Dorsolateral prefrontal cortex (tissue), 120 donors: ENCODE measurements at regions of chr12 and their contacts with region 1.

Region 1: DNA sequence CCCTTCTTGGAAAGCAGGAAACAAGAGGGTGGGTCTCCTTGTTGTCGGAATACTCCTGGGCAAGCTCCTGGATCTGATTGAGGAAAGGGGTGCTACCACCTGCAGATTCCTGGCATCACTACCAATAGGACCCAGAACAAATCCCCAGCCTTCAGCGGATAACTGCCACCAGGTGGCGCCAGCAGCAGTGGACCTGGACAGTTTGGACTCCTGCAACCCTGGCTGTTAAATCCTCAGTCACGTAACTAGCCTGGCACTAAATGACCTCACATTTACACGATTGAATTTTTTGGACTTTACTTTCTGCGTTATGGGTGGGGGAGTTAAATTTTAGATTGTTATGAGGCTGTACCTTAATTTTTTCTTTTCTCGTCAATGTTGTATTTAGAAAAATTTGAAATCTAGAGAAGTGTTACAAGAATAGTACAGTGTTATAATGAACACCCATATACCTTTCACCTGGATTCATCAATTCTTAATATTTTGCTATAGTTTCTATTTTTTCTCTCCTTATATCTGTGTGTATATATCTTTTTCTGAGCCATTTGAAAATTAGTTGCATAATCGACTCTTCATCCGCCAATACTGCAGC is 95.6 kb downstream of the GAS2L3 start:
- DNase-seq: peak; percentile 22 to 81 (median 70)
- H3K4me3 ChIP-seq: no peak overlapping the region
- H3K27ac ChIP-seq: no peak overlapping the region
- H3K27me3 ChIP-seq: peaks cover 0 to 11% (median 0%) of the 10 kb centered on the region in 45 donors
- CTCF ChIP-seq: peak; percentile 62 to 91 (median 78)

Region 2: DNA sequence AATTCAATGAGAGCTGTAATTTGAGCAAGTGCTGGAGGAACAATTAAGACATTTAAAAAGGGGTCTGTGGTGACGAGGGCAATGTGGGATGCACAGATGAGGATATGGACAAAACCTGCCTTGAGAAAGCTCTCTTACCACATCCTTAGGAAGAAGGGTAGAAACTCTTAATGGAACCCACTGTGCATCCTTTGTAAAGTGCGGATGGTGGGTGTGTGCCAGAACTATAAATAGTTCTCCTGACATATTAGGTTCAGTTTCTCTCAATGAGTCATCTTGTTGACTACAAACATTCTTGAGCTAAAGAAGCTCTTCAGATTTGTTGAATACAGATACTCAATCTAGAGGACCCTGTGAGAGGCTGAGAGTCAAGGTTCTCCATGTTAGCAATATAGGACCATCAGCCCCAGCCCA is 19.4 kb after region 1 on chr12:
- intact Hi-C with region 1: no loop called
- DNase-seq: no peak
- H3K4me3 ChIP-seq: no peak overlapping the region
- H3K27ac ChIP-seq: no peak overlapping the region
- H3K27me3 ChIP-seq: no peaks in the 10 kb centered on the region
- CTCF ChIP-seq: no peak

Region 3: GRCh38 chr12:100716945-100717732 is 48.1 kb after region 1 on chr12:
- intact Hi-C with region 1: no loop called
- DNase-seq: no peak
- H3K4me3 ChIP-seq: peak overlapping the region in 48 of 59 donors; percentile 7 to 60 (median 32)
- H3K27ac ChIP-seq: no peak overlapping the region
- H3K27me3 ChIP-seq: peaks cover 0 to 77% (median 54%) of the 10 kb centered on the region in 45 donors
- CTCF ChIP-seq: no peak

Region 4: GRCh38 chr12:100741084-100741711 is 72.2 kb after region 1 on chr12:
- intact Hi-C with region 1: loop called (anchors 5 kb)
- DNase-seq: peak in 1 of 10 donors; percentile 6
- H3K4me3 ChIP-seq: no peak overlapping the region
- H3K27ac ChIP-seq: no peak overlapping the region
- H3K27me3 ChIP-seq: peaks cover 0 to 10% (median 0%) of the 10 kb centered on the region in 45 donors
- CTCF ChIP-seq: peak; percentile 38 to 96 (median 74)

Region 5: GRCh38 chr12:100987552-100988521 is 318.8 kb after region 1 on chr12:
- intact Hi-C with region 1: loop called in 1 of 2 experiments (anchors 10 kb)
- DNase-seq: peak in 4 of 10 donors; percentile 7 to 53 (median 36)
- H3K4me3 ChIP-seq: no peak overlapping the region
- H3K27ac ChIP-seq: peak overlapping the region in 6 of 59 donors; percentile 3 to 64 (median 18)
- H3K27me3 ChIP-seq: no peaks in the 10 kb centered on the region
- CTCF ChIP-seq: peak in 39 of 56 donors; percentile 5 to 52 (median 29)

Region 6: GRCh38 chr12:101115326-101115725 is 446.3 kb after region 1 on chr12:
- intact Hi-C with region 1: loop called in 1 of 2 experiments (anchors 10 kb)
- DNase-seq: no peak
- H3K4me3 ChIP-seq: no peak overlapping the region
- H3K27ac ChIP-seq: no peak overlapping the region
- H3K27me3 ChIP-seq: no peaks in the 10 kb centered on the region
- CTCF ChIP-seq: no peak

Region 7: GRCh38 chr12:101200145-101200544 is 531.1 kb after region 1 on chr12:
- intact Hi-C with region 1: no loop called
- DNase-seq: no peak
- H3K4me3 ChIP-seq: no peak overlapping the region
- H3K27ac ChIP-seq: no peak overlapping the region
- H3K27me3 ChIP-seq: peaks cover 0 to 3% (median 0%) of the 10 kb centered on the region in 45 donors
- CTCF ChIP-seq: no peak